Caco-2 (cell line): ENCODE measurements at regions of chr4 and their contacts with region 1.

Region 1: DNA sequence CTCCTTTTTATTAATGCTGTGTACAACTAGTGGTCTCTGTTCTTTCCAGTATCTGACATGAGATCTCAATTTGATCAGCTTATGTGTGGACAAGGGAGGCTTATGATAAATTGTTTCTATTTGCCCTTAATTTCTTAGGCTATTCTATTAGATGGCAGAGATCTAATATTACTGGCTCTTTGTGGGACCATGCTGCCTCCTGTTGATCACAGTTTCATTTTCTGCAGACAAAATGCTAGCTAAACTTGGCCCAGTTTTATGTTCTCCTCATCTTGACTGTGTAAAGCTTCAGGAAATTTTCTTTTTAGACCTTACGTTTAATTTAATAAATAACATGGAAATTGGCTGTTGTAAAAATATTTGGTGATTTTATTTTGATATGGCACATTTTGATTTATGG is 627.1 kb upstream of the AADAT start:
- DNase-seq: no peak
- H3K4me3 ChIP-seq: no peak overlapping the region
- H3K4me3 Mint-ChIP-seq: no peak overlapping the region
- H3K27ac Mint-ChIP-seq: no peak overlapping the region
- H3K4me1 ChIP-seq: no peaks in the 10 kb centered on the region
- H3K4me1 Mint-ChIP-seq: no peaks in the 10 kb centered on the region
- H3K27me3 ChIP-seq: no peaks in the 10 kb centered on the region
- H3K27me3 Mint-ChIP-seq: no peaks in the 10 kb centered on the region
- CTCF ChIP-seq: no peak

Region 2: GRCh38 chr4:170476145-170476750 is 240.6 kb before region 1 on chr4:
- CTCF ChIA-PET with region 1: no interaction called
- POLR2A ChIA-PET with region 1: no interaction called
- intact Hi-C with region 1: no loop called
- DNase-seq: no peak
- H3K4me3 ChIP-seq: no peak overlapping the region
- H3K4me3 Mint-ChIP-seq: no peak overlapping the region
- H3K27ac Mint-ChIP-seq: no peak overlapping the region
- H3K4me1 ChIP-seq: no peaks in the 10 kb centered on the region
- H3K4me1 Mint-ChIP-seq: no peaks in the 10 kb centered on the region
- H3K27me3 ChIP-seq: no peaks in the 10 kb centered on the region
- H3K27me3 Mint-ChIP-seq: no peaks in the 10 kb centered on the region
- CTCF ChIP-seq: no peak

Region 3: GRCh38 chr4:170698334-170698733 is 18.5 kb before region 1 on chr4:
- CTCF ChIA-PET with region 1: no interaction called
- POLR2A ChIA-PET with region 1: no interaction called
- intact Hi-C with region 1: loop called (anchors 1 kb)
- DNase-seq: no peak
- H3K4me3 ChIP-seq: no peak overlapping the region
- H3K4me3 Mint-ChIP-seq: no peak overlapping the region
- H3K27ac Mint-ChIP-seq: no peak overlapping the region
- H3K4me1 ChIP-seq: no peaks in the 10 kb centered on the region
- H3K4me1 Mint-ChIP-seq: no peaks in the 10 kb centered on the region
- H3K27me3 ChIP-seq: no peaks in the 10 kb centered on the region
- H3K27me3 Mint-ChIP-seq: peaks cover 5% of the 10 kb centered on the region
- CTCF ChIP-seq: no peak